ENCODE measurements at regions of chr11 and their contacts with region 1.

Region 1: DNA sequence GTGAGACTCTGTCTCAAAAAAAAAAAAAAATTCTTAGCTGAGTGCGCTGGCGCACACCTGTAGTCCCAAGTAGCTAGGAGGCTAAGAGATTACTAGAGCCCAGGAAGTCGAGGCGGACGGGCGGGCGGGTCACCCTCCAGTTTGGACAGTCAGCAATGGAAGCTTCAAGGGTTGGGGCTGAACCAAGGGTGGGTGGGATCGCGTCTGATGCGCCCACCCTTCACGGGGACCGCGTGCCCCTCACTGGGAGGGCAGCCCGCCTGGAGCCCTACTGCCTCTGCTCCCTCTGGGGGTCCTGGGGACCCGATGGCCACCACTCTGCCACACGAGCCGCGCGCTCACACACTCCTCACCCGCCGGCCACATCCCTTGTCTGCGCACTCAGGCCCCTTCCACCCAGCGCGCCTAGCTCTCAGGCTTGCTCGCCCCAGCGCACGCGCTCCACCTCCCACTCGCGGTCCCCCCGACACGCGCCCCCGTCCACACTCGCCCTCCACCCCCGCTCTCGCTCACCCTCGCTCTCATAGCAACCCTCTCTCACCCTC is 494 bp downstream of the CHID1 start:
- DNase-seq: peak; percentile 31
- H3K27ac ChIP-seq: peak overlapping the region; percentile 92
- CTCF ChIP-seq: no peak

Region 2: GRCh38 chr11:932435-932834 is 22.3 kb after region 1 on chr11:
- CTCF ChIA-PET with region 1: no interaction called
- POLR2A ChIA-PET with region 1: no interaction called
- DNase-seq: no peak
- H3K27ac ChIP-seq: no peak overlapping the region
- CTCF ChIP-seq: no peak

Region 3: DNA sequence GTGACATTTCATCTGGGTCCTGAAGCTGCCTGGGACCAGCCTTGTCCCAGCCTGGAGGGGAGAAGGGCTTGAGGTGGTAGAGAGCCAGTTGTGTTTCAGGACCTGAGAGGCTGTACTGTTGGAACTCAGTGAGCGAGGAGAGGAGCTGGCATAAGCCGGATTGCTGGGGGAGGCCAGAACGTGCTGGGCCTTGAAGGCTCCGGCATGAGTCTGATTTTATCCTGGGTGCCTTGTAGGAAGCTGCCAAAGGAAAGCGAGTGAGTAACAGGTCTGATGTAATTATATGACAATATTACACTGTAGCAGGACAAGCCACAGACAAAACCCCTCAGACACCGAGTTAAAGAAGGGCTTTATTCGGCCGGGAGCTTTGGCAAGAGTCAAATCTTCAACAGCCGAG is 32.7 kb after region 1 on chr11:
- CTCF ChIA-PET with region 1: no interaction called
- POLR2A ChIA-PET with region 1: no interaction called
- DNase-seq: no peak
- H3K27ac ChIP-seq: peak overlapping the region; percentile 65
- CTCF ChIP-seq: no peak

Region 4: GRCh38 chr11:975827-976226 is 65.7 kb after region 1 on chr11:
- CTCF ChIA-PET with region 1: interaction called, 6 read pairs
- POLR2A ChIA-PET with region 1: interaction called, 10 read pairs
- DNase-seq: no peak
- H3K27ac ChIP-seq: no peak overlapping the region
- CTCF ChIP-seq: no peak

Measured in RWPE1 (cell line).